ENCODE measurements at regions of chr5 and their contacts with region 1.

Region 1: DNA sequence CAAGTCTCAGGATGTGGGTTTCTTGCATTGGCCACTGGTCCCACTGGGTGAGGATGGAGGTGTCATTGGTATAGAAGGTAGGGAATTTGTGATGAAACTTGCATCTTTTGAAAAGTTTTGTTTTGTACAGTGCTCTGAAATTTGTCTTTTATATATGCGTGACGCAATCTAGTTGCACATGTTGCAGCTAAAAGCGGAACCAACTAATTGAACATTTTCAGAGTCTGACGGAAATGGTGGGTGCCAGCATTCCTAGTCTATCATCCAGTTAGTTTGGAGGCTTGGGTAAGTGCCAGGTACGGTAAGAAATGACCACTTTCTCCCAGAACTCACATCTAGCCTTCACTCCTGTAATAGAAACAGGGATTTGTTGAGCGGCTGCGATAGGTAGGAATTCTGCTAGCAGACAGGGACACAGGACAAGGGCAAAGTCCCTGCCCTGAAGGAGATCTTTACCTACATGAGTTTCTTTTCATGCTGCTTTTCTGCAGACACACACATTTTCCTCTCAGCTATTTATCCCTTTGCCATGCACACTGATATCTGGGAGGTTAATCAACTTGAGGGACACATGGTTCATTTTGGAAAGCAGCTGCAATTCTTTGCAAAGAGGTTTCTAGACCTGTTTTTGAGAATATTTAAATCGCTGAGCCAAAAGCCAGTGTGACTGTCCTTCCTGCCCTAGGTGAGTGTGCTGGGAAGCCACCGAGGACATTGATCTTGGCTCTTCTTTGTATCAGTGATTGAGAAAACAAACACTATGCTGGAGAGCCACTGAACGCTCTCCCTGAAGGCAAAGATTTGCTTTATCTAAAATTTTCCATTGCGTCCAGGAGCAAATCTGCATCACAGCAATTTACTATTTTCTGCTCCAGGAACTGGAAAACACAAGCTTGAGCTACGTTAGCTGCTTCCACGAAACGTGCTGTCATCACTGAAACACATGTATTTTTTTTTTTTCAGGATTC is 89.7 kb downstream of the DAP start:
- DNase-seq: no peak
- H3K4me3 ChIP-seq: no peak overlapping the region
- H3K4me3 Mint-ChIP-seq: no peak overlapping the region
- H3K27ac Mint-ChIP-seq: no peak overlapping the region
- H3K4me1 ChIP-seq: 0 out of 2 replicates have a peak, but pooled peaks cover 7% of the 10 kb centered on the region
- H3K4me1 Mint-ChIP-seq: no peaks in the 10 kb centered on the region
- H3K27me3 ChIP-seq: no peaks in the 10 kb centered on the region
- H3K27me3 Mint-ChIP-seq: peaks cover 9% of the 10 kb centered on the region
- CTCF ChIP-seq: no peak

Region 2: GRCh38 chr5:10849278-10849677 is 178.0 kb after region 1 on chr5:
- CTCF ChIA-PET with region 1: no interaction called
- POLR2A ChIA-PET with region 1: no interaction called
- intact Hi-C with region 1: loop called (anchors 5 kb)
- DNase-seq: no peak
- H3K4me3 ChIP-seq: no peak overlapping the region
- H3K4me3 Mint-ChIP-seq: no peak overlapping the region
- H3K27ac Mint-ChIP-seq: no peak overlapping the region
- H3K4me1 ChIP-seq: no peaks in the 10 kb centered on the region
- H3K4me1 Mint-ChIP-seq: no peaks in the 10 kb centered on the region
- H3K27me3 ChIP-seq: no peaks in the 10 kb centered on the region
- H3K27me3 Mint-ChIP-seq: peaks cover 8% of the 10 kb centered on the region
- CTCF ChIP-seq: no peak